Activated T-helper 1 cell treated with anti-CD3 and anti-CD28 coated beads, Interleukin-12 subunit alpha, Interleukin-12 subunit beta, Interleukin-2, Interleukin-4 antibody, amounts not matched to agents 30 ng/mL and 10 ng/mL and 1 ng/mL, durations not matched to agents 14 hours and 24 hours and 36 hours (primary cell): ENCODE measurements at regions of chr1 and their contacts with region 1.

Region 1: DNA sequence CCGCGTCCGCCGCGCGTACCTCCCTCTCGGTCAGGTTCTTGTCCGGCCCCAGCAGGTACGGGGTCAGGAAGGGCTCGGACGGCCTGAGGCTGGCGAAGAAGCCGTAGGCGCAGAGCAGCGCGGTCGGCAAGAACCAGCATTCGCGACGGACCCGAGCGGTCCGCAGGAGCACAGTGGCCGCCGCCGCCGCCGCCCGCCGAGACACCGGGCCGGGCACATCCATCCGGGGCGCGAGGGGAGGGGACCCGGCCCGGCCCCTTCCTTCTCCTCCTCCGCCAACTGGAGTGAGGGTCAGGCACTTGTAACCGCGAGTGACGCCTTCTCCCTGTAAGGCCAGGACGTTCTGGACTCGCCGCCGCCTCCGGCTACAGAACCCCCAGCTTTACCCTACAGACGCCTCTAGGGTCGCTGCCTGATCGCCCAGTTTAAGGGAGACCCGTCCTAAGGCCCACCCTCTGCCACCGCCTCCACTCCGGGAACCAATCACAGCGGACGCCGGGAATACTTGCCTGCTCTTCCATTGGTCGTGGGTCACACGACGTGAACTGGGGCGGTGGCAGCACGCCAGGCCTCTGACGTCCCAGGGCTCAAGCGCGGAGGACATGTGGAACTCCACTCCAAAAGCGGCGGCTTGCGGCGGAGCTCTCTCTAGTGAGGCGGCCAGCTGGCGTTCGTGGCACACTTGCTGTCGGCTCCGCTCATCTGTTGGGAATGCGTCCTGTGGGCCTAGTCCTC is at the start of gene SLC19A2:
- DNase-seq: peak; percentile 93
- H3K4me3 Mint-ChIP-seq: peak within 1 kb of the TSS; percentile 94
- H3K27ac Mint-ChIP-seq: peak within 1 kb of the TSS; percentile 89
- H3K4me1 Mint-ChIP-seq: peaks cover 67% of the 10 kb centered on the region
- H3K27me3 Mint-ChIP-seq: no peaks in the 10 kb centered on the region
- total RNA-seq, gene SLC19A2: 12.8 and 14.0 TPM in 2 replicates

Region 2: GRCh38 chr1:168234846-168235547 is 1250.7 kb before region 1 on chr1:
- intact Hi-C with region 1: loop called (anchors 5 kb)
- DNase-seq: peak; percentile 39
- H3K4me3 Mint-ChIP-seq: peak overlapping the region; percentile 37
- H3K27ac Mint-ChIP-seq: peak overlapping the region; percentile 82
- H3K4me1 Mint-ChIP-seq: peaks cover 76% of the 10 kb centered on the region
- H3K27me3 Mint-ChIP-seq: no peaks in the 10 kb centered on the region

Region 3: DNA sequence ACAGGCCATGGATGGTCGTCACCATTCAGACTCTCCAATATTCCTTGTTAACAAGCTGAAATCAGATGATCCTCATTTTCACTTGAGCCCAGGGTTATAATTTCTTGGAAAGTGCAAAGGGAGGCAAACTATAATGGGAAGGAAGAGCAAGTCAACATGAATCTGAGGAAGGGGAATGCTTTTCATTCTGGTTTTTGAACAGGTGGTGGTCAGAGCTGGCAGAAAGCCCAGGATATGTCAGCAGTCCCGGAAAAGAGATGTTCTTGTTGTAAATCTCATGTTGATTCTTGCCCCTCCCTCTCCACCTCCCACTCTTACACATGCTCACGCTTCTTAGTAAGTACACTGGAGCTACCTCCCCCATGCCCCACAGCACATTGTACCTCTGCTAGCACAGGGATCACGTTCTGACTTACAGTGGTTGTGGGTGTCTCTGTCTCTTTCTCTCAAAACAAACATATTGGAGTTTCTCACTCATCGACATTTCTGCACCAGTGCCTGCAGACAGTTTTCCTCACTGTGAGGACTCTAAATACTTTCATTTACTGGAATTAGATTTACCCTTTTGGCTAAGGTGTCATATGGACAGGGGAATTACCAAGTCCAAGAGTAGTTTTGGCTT is 1019.5 kb before region 1 on chr1:
- intact Hi-C with region 1: loop called (anchors 10 kb)
- DNase-seq: peak; percentile 18
- H3K4me3 Mint-ChIP-seq: peak overlapping the region; percentile 30
- H3K27ac Mint-ChIP-seq: peak overlapping the region; percentile 71
- H3K4me1 Mint-ChIP-seq: peaks cover 67% of the 10 kb centered on the region
- H3K27me3 Mint-ChIP-seq: no peaks in the 10 kb centered on the region

Region 4: GRCh38 chr1:169427081-169427641 is 58.5 kb before region 1 on chr1 and contains the start of gene CCDC181:
- intact Hi-C with region 1: loop called (anchors 2 kb)
- DNase-seq: peak; percentile 65
- H3K4me3 Mint-ChIP-seq: peak within 1 kb of the TSS; percentile 92
- H3K27ac Mint-ChIP-seq: no peak within 1 kb of the TSS
- H3K4me1 Mint-ChIP-seq: peaks cover 7% of the 10 kb centered on the region
- H3K27me3 Mint-ChIP-seq: peaks cover 68% of the 10 kb centered on the region
- total RNA-seq, gene CCDC181: not detected in 2 replicates

Region 5: DNA sequence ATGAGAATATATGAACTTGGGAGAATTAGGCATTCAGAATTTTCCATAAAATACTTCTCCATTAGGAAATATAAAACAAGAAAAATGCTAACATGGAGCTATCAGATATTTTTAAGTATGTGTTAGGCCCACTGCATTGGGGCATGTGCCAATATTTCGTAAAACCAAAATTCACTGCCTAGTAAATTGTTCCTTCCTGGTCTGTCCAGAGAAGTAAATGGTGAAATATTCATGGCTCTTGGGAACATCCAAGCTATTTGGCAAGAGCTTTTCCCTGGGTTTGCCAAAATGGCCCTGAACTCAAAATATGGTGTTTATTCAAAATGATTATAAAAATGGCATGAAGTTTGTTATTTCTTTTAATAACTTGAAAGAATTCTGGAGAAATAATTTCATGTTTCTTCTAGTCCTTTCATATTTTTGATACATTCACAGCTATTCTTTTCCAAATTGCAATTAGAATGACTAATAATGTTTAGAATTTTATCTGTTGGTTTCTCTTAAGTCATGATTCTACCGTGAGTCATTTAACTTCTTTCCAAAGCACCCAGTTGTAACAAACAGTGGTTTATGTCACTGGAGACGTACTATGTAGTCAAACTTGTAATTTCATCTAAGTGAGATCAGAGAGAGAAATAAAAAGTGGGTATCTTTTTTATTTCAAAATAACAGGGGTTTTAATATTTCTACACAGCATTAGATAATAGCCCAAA is 25.8 kb after region 1 on chr1:
- intact Hi-C with region 1: no loop called
- DNase-seq: no peak
- H3K4me3 Mint-ChIP-seq: no peak overlapping the region
- H3K27ac Mint-ChIP-seq: no peak overlapping the region
- H3K4me1 Mint-ChIP-seq: peaks cover 23% of the 10 kb centered on the region
- H3K27me3 Mint-ChIP-seq: no peaks in the 10 kb centered on the region

Region 6: GRCh38 chr1:169586395-169587255 is 100.9 kb after region 1 on chr1 and contains the start of gene F5:
- intact Hi-C with region 1: loop called (anchors 2 kb)
- DNase-seq: peak; percentile 71
- H3K4me3 Mint-ChIP-seq: peak within 1 kb of the TSS; percentile 96
- H3K27ac Mint-ChIP-seq: peak within 1 kb of the TSS; percentile 91
- H3K4me1 Mint-ChIP-seq: peaks cover 81% of the 10 kb centered on the region
- H3K27me3 Mint-ChIP-seq: no peaks in the 10 kb centered on the region
- total RNA-seq, gene F5: 58.0 and 58.2 TPM in 2 replicates

Region 7: GRCh38 chr1:169794530-169795416 is 309.1 kb after region 1 on chr1 and contains the start of gene METTL18:
- intact Hi-C with region 1: loop called (anchors 1 kb)
- DNase-seq: peak; percentile 90
- H3K4me3 Mint-ChIP-seq: peak within 1 kb of the TSS; percentile 87
- H3K27ac Mint-ChIP-seq: peak within 1 kb of the TSS; percentile 86
- H3K4me1 Mint-ChIP-seq: peaks cover 55% of the 10 kb centered on the region
- H3K27me3 Mint-ChIP-seq: no peaks in the 10 kb centered on the region
- total RNA-seq, gene METTL18: 9.0 and 9.3 TPM in 2 replicates

Region 8: DNA sequence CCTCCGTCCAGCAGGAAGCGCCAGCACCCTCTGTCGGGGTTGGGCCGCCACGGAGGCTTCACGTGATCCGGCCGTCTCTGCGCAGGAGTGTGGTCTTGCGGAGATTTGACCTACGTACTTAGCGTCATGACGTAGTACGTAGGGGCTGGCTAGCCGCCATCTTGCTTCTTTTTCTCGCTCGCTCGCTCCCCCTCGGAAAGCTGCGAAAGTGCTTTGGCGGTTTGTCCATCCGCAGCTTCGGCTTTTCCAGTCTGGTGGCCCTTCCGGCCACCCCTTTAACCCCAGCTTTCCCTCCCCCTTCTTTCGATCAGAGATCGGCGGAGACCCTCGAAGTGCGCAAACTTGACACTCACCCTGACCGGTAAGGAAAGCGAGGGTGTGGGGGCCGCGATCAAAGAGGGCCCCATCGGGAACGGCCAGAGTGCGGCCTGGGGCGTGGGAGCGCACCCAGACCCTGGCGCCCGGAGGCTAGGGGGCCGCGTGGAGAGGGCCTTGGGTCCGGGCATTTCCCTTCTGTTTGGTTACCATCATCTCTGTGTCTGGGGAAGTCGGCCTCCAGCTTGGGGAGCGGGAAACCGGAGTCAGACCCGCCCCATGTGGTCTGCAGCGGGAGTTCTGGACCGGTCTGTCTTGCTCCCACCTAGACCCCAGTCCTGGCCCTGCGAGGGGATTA is 1999.8 kb after region 1 on chr1 and contains the start of gene PRRC2C:
- intact Hi-C with region 1: loop called (anchors 5 kb)
- DNase-seq: peak; percentile 91
- H3K4me3 Mint-ChIP-seq: peak within 1 kb of the TSS; percentile 98
- H3K27ac Mint-ChIP-seq: peak within 1 kb of the TSS; percentile 97
- H3K4me1 Mint-ChIP-seq: peaks cover 51% of the 10 kb centered on the region
- H3K27me3 Mint-ChIP-seq: peaks cover 1% of the 10 kb centered on the region
- total RNA-seq, gene PRRC2C: 291 and 295 TPM in 2 replicates